ENCODE measurements at regions of chr6 and their contacts with region 1.

Region 1: DNA sequence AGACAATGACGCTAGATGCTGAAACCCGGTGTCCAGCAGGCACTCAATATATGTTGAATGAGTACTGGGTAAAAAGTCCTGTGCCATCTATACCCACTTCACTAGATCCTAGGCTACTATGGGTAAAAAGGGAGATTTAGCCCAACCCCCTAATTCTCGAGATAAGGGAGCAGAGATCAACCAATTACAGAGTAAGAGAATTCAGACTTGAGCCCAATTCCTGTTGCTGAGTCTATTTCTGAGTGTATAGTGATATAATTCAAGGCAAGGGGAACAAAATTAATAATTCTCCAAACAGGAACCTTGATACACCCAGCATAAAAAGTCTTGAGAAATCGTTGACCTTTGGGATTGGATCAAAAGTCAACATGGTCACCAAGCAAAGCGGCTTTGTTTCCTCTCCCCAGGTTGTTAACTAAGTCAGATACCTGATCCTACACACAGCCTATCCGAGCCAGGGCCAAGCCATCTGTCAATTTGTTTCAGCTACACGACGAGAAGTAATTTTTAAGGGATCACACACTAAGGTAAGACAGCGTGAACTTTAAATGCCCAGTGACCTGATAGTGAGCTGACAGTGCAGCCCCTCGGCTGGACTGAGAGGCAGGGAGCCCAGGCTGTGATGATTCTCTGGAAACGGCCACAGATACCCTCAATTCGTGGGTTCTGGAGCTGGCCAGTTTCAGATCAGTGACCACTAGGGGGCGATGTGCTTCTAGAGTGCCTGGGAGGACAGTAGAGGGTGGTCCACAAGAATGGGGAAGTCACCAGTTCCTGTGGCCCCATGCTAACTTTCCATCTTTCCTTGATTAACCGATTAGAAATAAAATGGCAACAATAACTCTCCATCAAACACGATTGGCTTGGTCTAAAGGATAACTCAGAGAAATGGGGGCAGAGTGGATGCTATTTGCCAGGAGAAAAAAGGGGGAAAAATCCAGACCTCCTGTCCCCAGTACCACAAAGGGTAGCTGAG is 46.2 kb downstream of the SLC22A23 start:
- DNase-seq: peak; percentile 87
- H3K4me3 ChIP-seq: peak overlapping the region; percentile 22
- H3K27ac ChIP-seq: peak overlapping the region; percentile 92
- H3K4me1 ChIP-seq: no peaks in the 10 kb centered on the region
- H3K27me3 ChIP-seq: no peaks in the 10 kb centered on the region
- CTCF ChIP-seq: peak; percentile 65

Region 2: GRCh38 chr6:3312604-3313231 is 98.0 kb before region 1 on chr6:
- intact Hi-C with region 1: no loop called
- DNase-seq: no peak
- H3K4me3 ChIP-seq: no peak overlapping the region
- H3K27ac ChIP-seq: no peak overlapping the region
- H3K4me1 ChIP-seq: no peaks in the 10 kb centered on the region
- H3K27me3 ChIP-seq: no peaks in the 10 kb centered on the region
- CTCF ChIP-seq: no peak

Region 3: GRCh38 chr6:3456755-3457466 is 46.2 kb after region 1 on chr6 and contains the start of gene SLC22A23:
- intact Hi-C with region 1: loop called (anchors 5 kb)
- DNase-seq: peak; percentile 85
- H3K4me3 ChIP-seq: peak within 1 kb of the TSS; percentile 78
- H3K27ac ChIP-seq: peak within 1 kb of the TSS; percentile 57
- H3K4me1 ChIP-seq: peaks cover 6% of the 10 kb centered on the region
- H3K27me3 ChIP-seq: no peaks in the 10 kb centered on the region
- CTCF ChIP-seq: peak; percentile 58
- total RNA-seq, gene SLC22A23: 85.7 to 89.5 TPM